A673 (cell line): ENCODE measurements at regions of chr6 and their contacts with region 1.

Region 1: DNA sequence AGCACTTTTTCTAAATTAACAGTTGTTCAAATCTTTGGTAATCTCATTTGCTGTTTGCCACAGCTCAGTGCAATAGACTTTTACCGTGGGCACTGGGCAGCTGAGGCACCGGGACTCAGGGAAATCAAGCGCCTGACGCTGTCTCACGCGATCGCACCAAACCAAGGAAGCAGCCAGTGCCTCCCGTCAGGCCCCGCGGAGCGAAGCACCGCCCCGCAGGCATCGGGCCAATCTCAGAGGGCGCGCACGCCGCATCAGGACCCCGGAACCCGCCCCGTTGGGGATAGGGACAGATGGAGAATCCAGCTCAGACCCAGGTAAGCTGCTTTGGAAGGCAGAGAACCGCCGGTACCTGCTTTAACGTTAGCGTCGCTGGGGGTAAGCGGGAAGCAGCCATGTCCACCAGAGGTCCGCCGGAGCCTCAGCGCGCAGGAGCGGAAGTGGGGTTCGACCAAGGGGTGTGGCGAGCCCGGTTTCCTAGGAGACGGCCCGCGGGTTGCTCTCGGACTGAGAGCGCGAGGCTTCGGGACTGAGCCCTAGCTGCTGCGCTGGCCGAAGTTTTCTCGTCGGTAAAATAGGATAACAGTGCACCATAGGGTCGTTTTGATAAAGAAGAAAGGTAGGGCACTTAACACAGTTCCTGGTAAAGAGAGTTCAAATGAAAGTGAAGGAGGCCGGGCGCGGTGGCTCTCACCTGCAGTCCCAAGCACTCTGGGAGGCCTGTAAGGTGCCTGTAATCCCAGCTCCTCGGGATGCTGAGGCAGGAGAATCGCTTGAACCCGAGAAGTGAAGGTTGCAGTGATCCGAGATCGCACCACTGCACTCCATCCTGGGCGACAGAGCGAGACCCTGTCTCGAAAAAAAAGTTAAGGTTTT is at the start of gene LYRM2:
- DNase-seq: peak; percentile 96
- H3K4me3 ChIP-seq: peak within 1 kb of the TSS; percentile 56
- H3K27ac ChIP-seq: peak within 1 kb of the TSS; percentile 76
- H3K4me1 ChIP-seq: peaks cover 11% of the 10 kb centered on the region
- H3K27me3 ChIP-seq: no peaks in the 10 kb centered on the region
- CTCF ChIP-seq: 0 out of 2 replicates have a peak, but pooled peaks have one; percentile 13
- total RNA-seq, gene LYRM2: 64.3 and 68.2 TPM in 2 replicates

Region 2: GRCh38 chr6:89432875-89433251 is 205.7 kb before region 1 on chr6 and contains the start of gene ANKRD6:
- CTCF ChIA-PET with region 1: interaction called, 4 read pairs
- POLR2A ChIA-PET with region 1: no interaction called
- intact Hi-C with region 1: loop called (anchors 1 kb)
- DNase-seq: peak; percentile 83
- H3K4me3 ChIP-seq: peak within 1 kb of the TSS; percentile 83
- H3K27ac ChIP-seq: peak within 1 kb of the TSS; percentile 81
- H3K4me1 ChIP-seq: peaks cover 55% of the 10 kb centered on the region
- H3K27me3 ChIP-seq: no peaks in the 10 kb centered on the region
- CTCF ChIP-seq: peak; percentile 70
- total RNA-seq, gene ANKRD6: 25.4 and 36.4 TPM in 2 replicates

Region 3: GRCh38 chr6:89509766-89510281 is 128.7 kb before region 1 on chr6:
- CTCF ChIA-PET with region 1: no interaction called
- POLR2A ChIA-PET with region 1: no interaction called
- intact Hi-C with region 1: no loop called
- DNase-seq: peak; percentile 6
- H3K4me3 ChIP-seq: no peak overlapping the region
- H3K27ac ChIP-seq: no peak overlapping the region
- H3K4me1 ChIP-seq: no peaks in the 10 kb centered on the region
- H3K27me3 ChIP-seq: no peaks in the 10 kb centered on the region
- CTCF ChIP-seq: no peak

Region 4: GRCh38 chr6:89589297-89590025 is 49.1 kb before region 1 on chr6:
- CTCF ChIA-PET with region 1: no interaction called
- POLR2A ChIA-PET with region 1: interaction called, 16 read pairs
- intact Hi-C with region 1: no loop called
- DNase-seq: no peak
- H3K4me3 ChIP-seq: no peak overlapping the region
- H3K27ac ChIP-seq: no peak overlapping the region
- H3K4me1 ChIP-seq: no peaks in the 10 kb centered on the region
- H3K27me3 ChIP-seq: no peaks in the 10 kb centered on the region
- CTCF ChIP-seq: no peak